IMR-90 (cell line): ENCODE measurements at regions of chr6 and their contacts with region 1.

Region 1: DNA sequence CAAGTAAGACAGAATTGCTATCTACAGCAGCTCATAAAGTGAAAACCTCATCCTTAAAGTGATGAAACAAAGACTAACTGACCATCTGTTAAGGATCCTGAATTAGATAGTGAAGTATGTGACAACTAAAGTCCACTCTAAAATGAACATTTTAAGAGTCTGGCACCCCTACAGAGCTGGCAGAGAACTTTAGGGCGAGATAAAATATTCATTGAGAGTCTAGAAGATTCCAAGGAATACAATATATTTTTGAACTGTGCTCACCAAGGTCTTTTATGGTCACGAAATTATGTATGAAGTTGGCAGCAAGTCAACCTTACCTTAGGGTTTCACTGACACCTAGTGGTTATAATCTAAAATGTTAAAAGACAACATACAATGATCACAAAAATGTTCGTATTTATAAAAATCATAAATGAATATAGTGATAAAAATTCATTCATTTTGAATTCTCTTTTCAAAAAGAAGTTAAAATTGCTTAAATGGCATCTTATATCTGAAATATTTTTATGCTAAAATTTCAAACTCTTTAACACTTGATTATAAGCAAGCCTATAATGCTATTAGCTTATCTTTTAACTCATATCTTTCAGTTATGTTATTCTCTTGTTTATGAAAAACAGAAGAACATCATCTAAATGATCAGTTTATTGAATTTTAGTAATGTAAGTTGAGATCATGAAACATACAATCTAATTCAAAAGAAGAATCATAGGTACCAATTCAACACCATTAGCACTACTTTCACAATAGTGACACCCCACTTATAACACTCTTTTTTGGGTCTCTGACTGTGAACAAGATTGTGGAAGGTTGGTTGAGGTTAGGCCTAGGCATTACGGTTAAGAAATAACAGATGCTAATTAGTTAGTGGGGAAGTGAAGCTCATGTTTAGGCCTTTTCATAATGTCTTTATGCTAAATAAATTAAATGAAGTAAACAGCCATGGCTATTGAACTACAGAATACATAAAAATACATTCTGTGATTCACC is 27.5 kb downstream of the RSPH3 start:
- DNase-seq: peak; percentile 69
- ATAC-seq: peak; percentile 63
- H3K4me3 ChIP-seq: no peak overlapping the region
- H3K27ac ChIP-seq: no peak overlapping the region
- H3K4me1 ChIP-seq: no peaks in the 10 kb centered on the region
- H3K27me3 ChIP-seq: no peaks in the 10 kb centered on the region
- CTCF ChIP-seq: peak; percentile 71
- POLR2A ChIP-seq: peak; percentile 47; the same call in 1 of the 2 replicates
- RAD21 ChIP-seq: peak; percentile 88

Region 2: DNA sequence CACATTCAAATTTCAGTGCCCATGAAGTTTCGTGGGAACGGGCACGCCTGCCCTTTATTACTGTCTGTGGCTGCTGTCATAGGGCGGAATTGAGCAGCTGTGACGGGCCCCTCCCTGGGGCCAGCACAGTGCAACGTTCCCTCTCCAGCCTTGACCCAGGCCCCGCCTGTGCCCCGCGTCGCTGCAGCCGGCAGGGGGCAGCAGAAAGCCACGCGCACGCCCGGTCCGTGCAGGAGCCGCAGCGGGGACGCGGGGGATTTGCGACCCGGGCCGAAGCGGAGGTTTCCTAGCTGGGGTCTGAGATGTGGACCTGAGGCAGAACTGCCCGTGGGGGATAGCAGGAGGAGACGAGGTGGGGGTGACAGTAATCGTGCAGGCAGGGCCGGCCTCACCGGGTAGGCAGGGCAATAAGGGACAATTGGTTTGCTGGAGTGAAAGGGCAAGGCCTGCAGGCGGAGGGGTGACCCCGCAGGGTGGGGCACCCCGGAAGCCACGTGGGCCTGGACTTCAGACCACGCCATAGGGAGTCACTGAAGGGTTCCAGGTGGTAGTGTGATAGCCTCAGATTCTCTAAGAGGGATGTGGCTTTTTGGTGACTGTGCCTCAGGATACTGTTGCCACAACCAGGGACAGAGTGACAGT is 268.2 kb before region 1 on chr6:
- CTCF ChIA-PET with region 1: interaction called, 18 read pairs
- POLR2A ChIA-PET with region 1: no interaction called
- dilution Hi-C with region 1: no loop called
- in situ Hi-C with region 1: loop called (anchors 5 kb)
- intact Hi-C with region 1: loop called (anchors 1 kb)
- DNase-seq: peak; percentile 28
- ATAC-seq: peak; percentile 94
- H3K4me3 ChIP-seq: peak overlapping the region; percentile 50
- H3K27ac ChIP-seq: no peak overlapping the region
- H3K4me1 ChIP-seq: peaks cover 12% of the 10 kb centered on the region; the same call in 1 of the 2 replicates
- H3K27me3 ChIP-seq: no peaks in the 10 kb centered on the region
- CTCF ChIP-seq: peak; percentile 95
- POLR2A ChIP-seq: no peak
- RAD21 ChIP-seq: peak; percentile 83

Region 3: GRCh38 chr6:158793432-158793831 is 179.1 kb before region 1 on chr6:
- CTCF ChIA-PET with region 1: interaction called, 5 read pairs
- POLR2A ChIA-PET with region 1: no interaction called
- dilution Hi-C with region 1: no loop called
- in situ Hi-C with region 1: loop called (anchors 5 kb)
- intact Hi-C with region 1: loop called (anchors 1 kb)
- DNase-seq: peak; percentile 65
- ATAC-seq: peak; percentile 80
- H3K4me3 ChIP-seq: no peak overlapping the region
- H3K27ac ChIP-seq: no peak overlapping the region
- H3K4me1 ChIP-seq: peaks cover 2% of the 10 kb centered on the region; the same call in 1 of the 2 replicates
- H3K27me3 ChIP-seq: no peaks in the 10 kb centered on the region
- CTCF ChIP-seq: peak; percentile 62
- POLR2A ChIP-seq: no peak
- RAD21 ChIP-seq: peak; percentile 79

Region 4: GRCh38 chr6:158799051-158799792 is 173.3 kb before region 1 on chr6:
- CTCF ChIA-PET with region 1: no interaction called
- POLR2A ChIA-PET with region 1: no interaction called
- dilution Hi-C with region 1: no loop called
- in situ Hi-C with region 1: loop called (anchors 5 kb)
- intact Hi-C with region 1: no loop called
- DNase-seq: peak; percentile 46
- ATAC-seq: no peak; the same call in 1 of the 2 replicates
- H3K4me3 ChIP-seq: no peak overlapping the region
- H3K27ac ChIP-seq: no peak overlapping the region
- H3K4me1 ChIP-seq: peaks cover 15% of the 10 kb centered on the region
- H3K27me3 ChIP-seq: no peaks in the 10 kb centered on the region
- CTCF ChIP-seq: no peak
- POLR2A ChIP-seq: no peak
- RAD21 ChIP-seq: no peak

Region 5: DNA sequence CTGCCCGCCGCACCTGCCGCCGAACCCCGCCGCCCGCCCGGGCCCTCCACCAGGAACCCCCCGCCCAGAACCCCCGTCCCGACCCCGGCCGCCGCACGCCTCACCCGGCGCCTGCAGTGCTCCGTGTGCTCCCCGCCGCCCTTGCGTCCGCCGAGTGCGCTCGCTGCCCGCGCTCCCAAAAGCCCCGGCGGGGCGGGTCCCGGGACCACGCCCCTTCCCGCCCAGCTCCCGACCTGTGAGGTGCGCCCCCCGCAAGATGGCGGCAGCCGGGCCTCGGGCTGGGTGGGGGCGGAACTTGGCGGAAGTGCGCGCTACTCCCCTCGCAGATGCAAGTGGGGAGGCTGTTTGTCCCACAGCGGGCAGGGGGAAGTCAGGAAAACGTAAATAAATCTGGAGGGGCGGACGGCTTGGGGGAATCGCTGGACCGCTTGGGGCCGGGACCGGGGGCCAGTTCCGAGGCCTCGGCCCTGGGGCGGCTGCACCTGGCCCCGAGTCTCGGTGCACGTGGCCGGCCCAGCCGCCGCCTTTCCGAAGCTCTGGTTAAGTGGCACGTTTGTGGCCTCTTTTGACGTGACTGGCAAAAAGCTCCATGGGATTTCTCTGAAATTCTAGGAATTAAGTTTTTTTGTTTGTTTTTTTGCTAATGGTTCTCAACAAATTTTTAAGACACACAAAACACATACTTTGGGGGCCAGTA is 153.2 kb before region 1 on chr6 and contains the start of gene EZR:
- CTCF ChIA-PET with region 1: no interaction called
- POLR2A ChIA-PET with region 1: no interaction called
- dilution Hi-C with region 1: no loop called
- in situ Hi-C with region 1: no loop called
- intact Hi-C with region 1: loop called (anchors 1 kb)
- DNase-seq: peak; percentile 57
- ATAC-seq: peak; percentile 74
- H3K4me3 ChIP-seq: peak within 1 kb of the TSS; percentile 70
- H3K27ac ChIP-seq: peak within 1 kb of the TSS; percentile 67
- H3K4me1 ChIP-seq: peaks cover 6% of the 10 kb centered on the region
- H3K27me3 ChIP-seq: no peaks in the 10 kb centered on the region
- CTCF ChIP-seq: peak; percentile 7; the same call in 1 of the 2 replicates
- POLR2A ChIP-seq: peak; percentile 85
- RAD21 ChIP-seq: no peak; the same call in 1 of the 2 replicates
- total RNA-seq, gene EZR: 145 and 179 TPM in 2 replicates